Activated naive CD8-positive, alpha-beta T cell treated with anti-CD3 and anti-CD28 coated beads, Interleukin-2, amount 10 ng/mL, durations not matched to agents 7 days and 5 days (primary cell): ENCODE measurements at regions of chr1 and their contacts with region 1.

Region 1: GRCh38 chr1:11719313-11720032 is 16.5 kb upstream of the AGTRAP start:
- DNase-seq: peak; percentile 88
- ATAC-seq: peak; percentile 92
- H3K4me3 Mint-ChIP-seq: peak overlapping the region; percentile 66
- H3K27ac Mint-ChIP-seq: peak overlapping the region; percentile 90
- H3K4me1 Mint-ChIP-seq: peaks cover 16% of the 10 kb centered on the region
- H3K27me3 Mint-ChIP-seq: no peaks in the 10 kb centered on the region

Region 2: DNA sequence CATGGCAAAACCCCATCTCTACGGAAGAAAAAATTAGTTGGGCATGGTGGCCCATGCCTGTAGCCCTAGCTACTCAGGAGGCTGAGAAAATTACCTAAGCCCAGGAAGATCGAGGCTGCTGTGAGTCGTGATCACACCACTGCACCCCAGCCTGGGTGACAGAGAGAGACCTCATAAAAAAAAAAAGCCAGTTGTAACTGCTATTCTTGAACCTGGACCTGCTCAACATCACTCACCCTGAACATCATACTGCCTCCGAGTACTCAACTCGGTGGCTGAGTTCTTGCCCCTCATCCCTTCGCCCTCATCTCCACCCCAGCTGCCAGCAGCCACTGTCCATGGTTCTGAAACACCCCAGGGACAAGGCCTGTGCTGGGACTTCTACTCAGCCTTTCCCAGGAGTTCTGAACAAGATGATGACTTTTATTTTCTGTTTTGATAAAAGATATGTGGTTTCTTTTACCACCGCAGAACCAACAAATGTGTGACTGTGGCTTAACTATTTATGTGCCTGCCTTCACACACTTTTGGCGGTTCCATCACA is 245.9 kb before region 1 on chr1:
- POLR2A ChIA-PET with region 1: no interaction called
- DNase-seq: peak; percentile 48
- ATAC-seq: no peak
- H3K4me3 Mint-ChIP-seq: no peak overlapping the region
- H3K27ac Mint-ChIP-seq: no peak overlapping the region
- H3K4me1 Mint-ChIP-seq: no peaks in the 10 kb centered on the region
- H3K27me3 Mint-ChIP-seq: peaks cover 16% of the 10 kb centered on the region

Region 3: GRCh38 chr1:11650331-11650991 is 69.0 kb before region 1 on chr1:
- POLR2A ChIA-PET with region 1: interaction called, 83 read pairs
- DNase-seq: peak; percentile 88
- ATAC-seq: peak; percentile 85
- H3K4me3 Mint-ChIP-seq: peak overlapping the region; percentile 61
- H3K27ac Mint-ChIP-seq: peak overlapping the region; percentile 65
- H3K4me1 Mint-ChIP-seq: peaks cover 18% of the 10 kb centered on the region
- H3K27me3 Mint-ChIP-seq: no peaks in the 10 kb centered on the region

Region 4: GRCh38 chr1:11658308-11658941 is 61.0 kb before region 1 on chr1:
- POLR2A ChIA-PET with region 1: interaction called, 86 read pairs
- DNase-seq: no peak
- ATAC-seq: no peak
- H3K4me3 Mint-ChIP-seq: no peak overlapping the region
- H3K27ac Mint-ChIP-seq: no peak overlapping the region
- H3K4me1 Mint-ChIP-seq: peaks cover 4% of the 10 kb centered on the region
- H3K27me3 Mint-ChIP-seq: no peaks in the 10 kb centered on the region

Region 5: DNA sequence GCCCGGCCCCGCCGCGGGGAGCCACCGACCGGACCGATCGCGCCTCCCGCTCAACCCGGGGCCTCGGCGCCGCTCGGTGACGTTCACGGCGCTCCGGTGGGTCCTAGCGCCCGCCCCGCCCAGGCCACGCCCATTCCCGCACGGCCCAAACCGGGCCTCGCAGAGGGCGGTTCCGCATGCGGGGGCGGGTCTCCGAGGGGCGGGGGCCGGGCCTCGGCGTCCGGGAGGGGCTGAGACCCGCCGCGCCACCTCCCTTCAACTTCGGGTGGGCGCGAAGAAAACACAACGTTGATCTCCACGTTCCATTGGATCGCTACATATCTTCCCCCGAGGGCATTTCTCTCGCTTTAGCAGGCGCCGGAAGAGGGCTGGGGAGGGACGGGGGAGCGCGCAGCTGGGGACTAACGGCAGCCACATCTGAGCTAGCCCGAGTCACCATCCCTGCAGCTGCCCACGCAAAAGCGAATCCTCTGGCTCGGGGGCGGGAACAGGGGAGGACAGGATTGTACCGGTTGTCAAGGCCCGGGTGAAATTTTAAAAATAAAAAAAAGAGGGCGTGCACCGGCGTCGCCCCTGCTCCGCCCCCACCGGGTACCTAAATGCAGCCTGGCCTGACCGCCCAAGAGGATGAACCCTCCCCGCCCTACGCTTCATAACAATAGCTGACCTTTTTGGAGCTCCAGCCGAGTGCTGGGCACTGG is 38.3 kb before region 1 on chr1 and contains the start of gene MAD2L2:
- POLR2A ChIA-PET with region 1: interaction called, 24 read pairs
- DNase-seq: peak; percentile 97
- ATAC-seq: peak; percentile 82
- H3K4me3 Mint-ChIP-seq: peak within 1 kb of the TSS; percentile 92
- H3K27ac Mint-ChIP-seq: peak within 1 kb of the TSS; percentile 89
- H3K4me1 Mint-ChIP-seq: peaks cover 15% of the 10 kb centered on the region
- H3K27me3 Mint-ChIP-seq: peaks cover 16% of the 10 kb centered on the region
- total RNA-seq, gene MAD2L2: 95.4 to 103 TPM

Region 6: DNA sequence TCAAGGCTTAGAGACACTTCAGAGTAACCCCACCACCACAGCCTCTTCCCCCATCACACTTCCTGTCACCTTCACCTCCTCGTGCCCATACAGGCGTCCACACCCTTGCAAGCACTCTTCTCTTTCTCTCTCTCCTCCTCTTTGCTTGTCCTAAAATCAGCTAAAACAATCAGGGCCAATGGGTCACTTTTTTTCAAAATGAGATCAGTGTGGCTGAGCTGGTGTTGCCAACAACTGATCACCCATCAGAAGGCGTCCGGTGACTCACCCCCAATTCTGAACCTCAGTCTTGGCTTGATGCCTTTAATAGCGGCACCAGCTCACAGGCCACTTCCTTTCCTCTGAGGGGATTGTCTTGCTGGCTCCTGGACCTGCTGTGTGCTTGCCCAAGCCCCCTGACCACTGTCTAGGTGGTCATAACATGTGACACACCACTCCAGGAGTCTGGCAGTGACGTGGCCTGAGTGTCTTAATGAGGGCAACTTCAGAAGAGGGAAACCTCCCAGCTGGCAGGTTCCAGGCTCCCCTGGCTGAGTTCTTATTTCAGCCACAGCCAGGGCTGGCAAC is 26.4 kb before region 1 on chr1:
- POLR2A ChIA-PET with region 1: interaction called, 15 read pairs
- DNase-seq: peak; percentile 54
- ATAC-seq: peak; percentile 71
- H3K4me3 Mint-ChIP-seq: peak overlapping the region; percentile 85
- H3K27ac Mint-ChIP-seq: peak overlapping the region; percentile 80
- H3K4me1 Mint-ChIP-seq: peaks cover 37% of the 10 kb centered on the region
- H3K27me3 Mint-ChIP-seq: peaks cover 30% of the 10 kb centered on the region

Region 7: DNA sequence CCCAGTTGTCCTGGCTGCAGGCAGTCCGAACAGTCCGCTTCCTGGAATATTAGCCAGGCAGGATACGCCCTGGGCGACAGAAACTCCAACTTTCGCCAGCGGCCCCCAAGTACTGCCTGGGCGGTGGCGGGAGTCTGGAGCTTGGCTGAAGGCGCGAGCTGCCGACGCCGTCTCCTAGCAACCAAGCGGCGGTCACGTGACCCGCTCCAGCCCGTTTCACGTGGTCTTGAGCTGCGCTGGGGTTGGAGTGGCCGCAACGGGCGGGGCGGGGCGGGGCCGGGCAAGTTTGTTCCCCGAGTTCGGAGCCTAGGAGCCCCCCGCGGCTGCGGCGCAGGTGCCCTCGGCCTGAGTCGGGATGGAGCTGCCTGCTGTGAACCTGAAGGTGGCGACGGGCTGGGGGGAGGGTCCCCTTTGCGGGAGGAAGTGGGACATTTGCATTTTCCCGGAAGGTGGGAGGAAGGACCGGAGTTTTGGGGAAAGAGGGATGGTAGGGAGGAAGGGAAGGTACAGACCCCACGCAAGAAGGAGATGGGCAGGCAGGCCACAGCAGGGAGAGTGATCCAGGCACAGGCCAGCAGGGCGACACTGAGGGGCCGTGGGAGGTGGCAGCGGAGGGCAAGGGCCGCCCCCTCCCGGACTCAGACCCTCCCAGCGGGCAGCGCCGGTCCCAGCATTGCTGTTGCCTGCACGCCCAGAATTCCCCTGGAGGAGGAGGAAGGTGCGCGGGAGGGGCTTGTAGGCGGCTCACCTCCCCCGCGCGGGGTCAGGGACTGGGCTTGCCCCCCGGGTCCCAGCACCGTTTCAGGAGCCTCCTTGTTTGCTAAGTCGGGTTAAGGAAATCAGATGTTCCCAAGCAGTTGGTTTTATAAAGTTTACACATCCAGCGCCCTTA is 16.6 kb after region 1 on chr1 and contains the start of gene AGTRAP:
- POLR2A ChIA-PET with region 1: interaction called, 25 read pairs
- DNase-seq: peak; percentile 88
- ATAC-seq: peak; percentile 71
- H3K4me3 Mint-ChIP-seq: peak within 1 kb of the TSS; percentile 99
- H3K27ac Mint-ChIP-seq: peak within 1 kb of the TSS; percentile 98
- H3K4me1 Mint-ChIP-seq: peaks cover 64% of the 10 kb centered on the region
- H3K27me3 Mint-ChIP-seq: no peaks in the 10 kb centered on the region
- total RNA-seq, gene AGTRAP: 53.8 to 56.4 TPM

Region 8: DNA sequence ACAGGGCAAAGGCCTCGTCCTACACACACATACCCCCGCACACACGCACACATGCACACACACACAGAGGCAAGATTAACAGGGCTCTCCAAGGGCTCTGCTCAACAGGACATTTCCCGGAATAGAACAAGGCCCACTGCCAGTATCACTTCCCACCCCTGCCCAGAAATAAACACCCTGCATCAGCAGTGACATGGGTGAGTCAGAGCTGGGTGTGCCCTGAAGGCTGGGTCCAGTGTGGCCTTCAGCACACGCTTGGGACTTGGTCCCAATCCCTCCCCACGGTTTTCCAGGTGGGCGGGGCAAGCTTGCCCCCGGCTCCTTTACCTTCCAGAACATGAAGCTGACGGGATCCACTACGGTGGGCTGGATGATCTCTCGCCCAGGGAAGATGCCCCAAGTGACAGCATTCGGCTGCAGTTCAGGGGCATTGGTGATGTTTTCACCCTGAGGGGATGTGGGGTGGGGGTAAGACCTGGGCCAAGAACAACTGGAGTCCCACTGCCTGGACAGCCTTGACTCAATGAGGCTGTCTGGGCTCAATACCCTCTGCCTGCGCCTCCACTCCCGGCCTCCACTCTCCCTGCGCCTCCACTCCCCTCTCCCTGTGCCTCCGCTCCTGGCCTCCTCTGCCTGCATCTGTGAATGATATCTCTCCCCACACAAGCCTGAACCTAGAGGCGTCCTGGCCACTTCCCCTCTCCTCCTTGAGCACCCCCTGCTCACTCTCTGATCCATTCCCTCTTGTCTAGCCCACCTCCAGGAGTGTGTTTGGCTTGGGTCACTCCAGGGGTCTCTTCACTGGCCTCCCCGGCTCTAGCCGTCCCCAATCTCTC is 71.6 kb after region 1 on chr1:
- POLR2A ChIA-PET with region 1: no interaction called
- DNase-seq: no peak
- ATAC-seq: no peak
- H3K4me3 Mint-ChIP-seq: no peak overlapping the region
- H3K27ac Mint-ChIP-seq: peak overlapping the region; percentile 59
- H3K4me1 Mint-ChIP-seq: no peaks in the 10 kb centered on the region
- H3K27me3 Mint-ChIP-seq: no peaks in the 10 kb centered on the region